OCI-LY7 (cell line): ENCODE measurements at regions of chr7 and their contacts with region 1.

Region 1: GRCh38 chr7:43582503-43583423 is at the start of gene STK17A:
- DNase-seq: peak; percentile 94
- H3K4me3 ChIP-seq: peak within 1 kb of the TSS; percentile 98
- H3K27ac ChIP-seq: peak within 1 kb of the TSS; percentile 83
- H3K4me1 ChIP-seq: peaks cover 29% of the 10 kb centered on the region
- CTCF ChIP-seq: peak; percentile 96
- total RNA-seq, gene STK17A: 28.7 and 32.4 TPM in 2 replicates

Region 2: DNA sequence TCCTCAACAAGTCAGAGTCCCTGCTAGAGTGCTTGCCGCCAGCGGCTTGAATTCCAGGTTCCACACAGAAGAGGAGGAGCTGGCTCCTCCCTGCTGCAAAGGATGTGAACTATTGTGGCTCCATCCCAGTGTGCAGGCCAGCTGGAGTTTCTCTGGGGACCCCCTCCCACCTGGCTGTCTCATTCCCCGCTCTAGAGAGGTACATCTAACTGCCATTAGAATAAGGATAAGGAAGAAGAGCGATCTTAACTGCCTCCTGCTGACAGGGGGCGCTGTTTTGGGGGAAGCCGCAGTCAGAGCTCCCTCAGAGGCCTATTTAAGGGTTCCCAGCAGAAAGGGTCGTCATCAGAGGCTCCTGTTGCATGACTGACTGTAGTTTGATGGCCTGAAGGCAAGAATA is 511.2 kb before region 1 on chr7:
- CTCF ChIA-PET with region 1: no interaction called
- POLR2A ChIA-PET with region 1: no interaction called
- intact Hi-C with region 1: loop called (anchors 10 kb)
- DNase-seq: peak; percentile 73
- H3K4me3 ChIP-seq: peak overlapping the region; percentile 44
- H3K27ac ChIP-seq: peak overlapping the region; percentile 98
- H3K4me1 ChIP-seq: peaks cover 79% of the 10 kb centered on the region
- CTCF ChIP-seq: peak; percentile 85

Region 3: GRCh38 chr7:43572516-43573049 is 10.2 kb before region 1 on chr7:
- CTCF ChIA-PET with region 1: interaction called, 4 read pairs
- POLR2A ChIA-PET with region 1: interaction called, 10 read pairs
- intact Hi-C with region 1: no loop called
- DNase-seq: no peak
- H3K4me3 ChIP-seq: no peak overlapping the region
- H3K27ac ChIP-seq: no peak overlapping the region
- H3K4me1 ChIP-seq: no peaks in the 10 kb centered on the region
- CTCF ChIP-seq: no peak

Region 4: DNA sequence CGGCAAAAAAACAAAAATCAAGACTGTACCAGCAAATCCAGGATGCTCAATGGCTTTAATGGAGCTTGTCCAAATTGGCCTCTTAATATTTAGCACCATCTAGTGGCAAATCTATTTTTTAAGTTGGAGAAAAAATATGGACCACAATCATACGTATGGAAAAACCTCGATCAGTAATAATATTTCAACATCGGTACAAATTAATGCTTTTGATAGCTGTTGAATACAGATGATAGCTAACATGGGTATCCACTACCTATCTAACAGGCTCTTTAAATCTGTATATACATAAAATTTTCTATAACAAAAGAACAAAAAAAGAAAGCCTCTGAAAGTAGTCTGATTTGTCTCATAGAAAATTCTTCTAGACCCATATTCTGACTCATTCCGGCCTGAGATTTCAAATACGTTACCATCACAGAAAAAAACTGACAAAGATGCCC is 117.3 kb after region 1 on chr7:
- CTCF ChIA-PET with region 1: interaction called, 83 read pairs
- POLR2A ChIA-PET with region 1: interaction called, 93 read pairs
- intact Hi-C with region 1: loop called (anchors 1 kb)
- DNase-seq: peak; percentile 77
- H3K4me3 ChIP-seq: no peak overlapping the region
- H3K27ac ChIP-seq: no peak overlapping the region
- H3K4me1 ChIP-seq: peaks cover 21% of the 10 kb centered on the region
- CTCF ChIP-seq: peak; percentile 95

Region 5: GRCh38 chr7:43729214-43729923 is 146.6 kb after region 1 on chr7 and contains the start of gene COA1:
- CTCF ChIA-PET with region 1: interaction called, 11 read pairs
- POLR2A ChIA-PET with region 1: interaction called, 5 read pairs
- intact Hi-C with region 1: loop called (anchors 1 kb)
- DNase-seq: peak; percentile 89
- H3K4me3 ChIP-seq: peak within 1 kb of the TSS; percentile 80
- H3K27ac ChIP-seq: peak within 1 kb of the TSS; percentile 41
- H3K4me1 ChIP-seq: peaks cover 19% of the 10 kb centered on the region
- CTCF ChIP-seq: peak; percentile 29; the same call in 1 of the 2 replicates
- total RNA-seq, gene COA1: 96.0 and 96.9 TPM in 2 replicates

Region 6: DNA sequence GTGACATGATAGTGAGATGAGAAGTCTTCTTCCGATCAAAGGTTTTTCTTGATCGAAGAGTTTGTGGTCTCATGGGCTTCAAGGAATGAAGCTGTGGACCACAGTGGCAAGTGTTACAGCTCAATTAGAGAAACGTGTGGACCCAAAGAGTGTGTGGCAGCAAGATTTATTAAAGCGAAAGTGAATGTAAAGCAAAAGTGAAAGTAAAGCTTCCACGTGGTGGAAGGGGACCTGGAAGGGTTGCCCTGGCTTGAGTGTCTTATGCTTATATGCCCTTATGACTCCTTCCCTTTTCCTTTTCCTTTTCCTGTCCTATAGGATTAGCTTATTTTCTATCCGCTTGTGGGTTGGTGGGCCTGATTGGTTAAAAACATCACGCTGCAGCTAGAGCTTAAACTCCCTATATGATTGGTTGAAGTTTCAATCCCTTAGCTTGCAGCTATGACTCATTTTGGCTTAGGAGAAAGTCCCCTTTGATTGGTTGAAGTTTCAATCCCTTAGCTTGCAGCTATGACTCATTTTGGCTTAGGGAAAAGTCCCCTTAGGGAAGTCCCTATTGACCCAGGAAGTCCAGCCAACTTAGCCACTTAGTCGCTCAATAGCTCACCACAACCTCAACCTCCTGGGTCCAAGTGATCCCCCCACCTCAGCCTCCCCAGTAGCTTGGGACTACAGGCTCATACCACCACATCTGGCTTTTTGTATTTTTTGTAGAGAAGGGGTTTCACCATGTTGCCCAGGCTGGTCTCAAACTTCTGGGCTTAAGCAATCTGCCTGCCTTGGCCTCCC is 251.9 kb after region 1 on chr7:
- CTCF ChIA-PET with region 1: interaction called, 9 read pairs
- POLR2A ChIA-PET with region 1: interaction called, 3 read pairs
- intact Hi-C with region 1: loop called (anchors 1 kb)
- DNase-seq: peak; percentile 53
- H3K4me3 ChIP-seq: peak overlapping the region; percentile 54
- H3K27ac ChIP-seq: no peak overlapping the region
- H3K4me1 ChIP-seq: peaks cover 10% of the 10 kb centered on the region
- CTCF ChIP-seq: no peak